ENCODE measurements at regions of chr18 and their contacts with region 1.

Region 1: DNA sequence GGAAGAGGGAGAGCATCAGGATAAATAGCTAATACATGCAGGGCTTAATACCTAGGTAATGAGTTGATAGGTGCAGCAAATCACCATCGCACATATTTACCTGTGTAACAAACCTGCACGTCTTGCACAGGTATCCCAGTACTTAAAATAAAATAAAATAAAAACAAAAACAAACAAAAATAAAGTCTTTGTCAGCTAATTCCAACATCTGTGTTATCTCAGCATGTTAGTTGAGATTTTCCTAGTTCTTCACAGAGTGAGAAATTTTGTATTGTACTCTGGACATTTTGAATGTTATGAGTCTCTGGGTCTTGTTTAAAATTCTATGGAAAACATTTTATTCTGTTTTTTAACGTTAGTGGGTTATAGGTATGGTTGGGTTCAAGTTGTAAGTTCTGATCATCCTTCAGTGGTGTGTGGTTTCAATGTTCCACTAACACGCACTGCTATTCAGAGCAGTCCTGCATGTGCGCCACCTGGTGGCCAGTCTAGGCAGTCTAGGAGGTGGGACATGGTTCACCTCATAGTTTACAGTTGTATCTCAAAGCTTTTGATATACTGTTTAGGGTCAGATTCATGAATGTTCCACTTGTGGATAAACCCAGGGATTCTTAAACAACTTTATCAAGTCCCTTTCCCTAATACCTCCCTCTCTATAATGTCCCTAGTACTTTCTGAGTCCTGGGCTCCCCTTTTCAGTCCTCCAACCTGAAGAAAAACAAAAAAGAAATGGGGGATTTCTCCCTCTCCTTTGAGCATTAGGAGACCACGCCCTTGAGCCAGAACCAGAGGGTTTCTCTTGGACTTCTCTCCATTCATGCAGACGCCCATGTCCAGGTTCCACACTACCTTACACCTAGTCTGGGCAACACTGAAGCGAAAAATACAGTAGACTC is 213.4 kb upstream of the GATA6 start:
- DNase-seq: peak; percentile 60
- ATAC-seq: peak; percentile 100
- H3K4me3 ChIP-seq: no peak overlapping the region
- H3K27ac ChIP-seq: no peak overlapping the region
- H3K4me1 ChIP-seq: no peaks in the 10 kb centered on the region
- H3K27me3 ChIP-seq: peaks cover 18% of the 10 kb centered on the region
- CTCF ChIP-seq: peak; percentile 83
- POLR2A ChIP-seq: no peak
- RAD21 ChIP-seq: peak; percentile 68

Region 2: DNA sequence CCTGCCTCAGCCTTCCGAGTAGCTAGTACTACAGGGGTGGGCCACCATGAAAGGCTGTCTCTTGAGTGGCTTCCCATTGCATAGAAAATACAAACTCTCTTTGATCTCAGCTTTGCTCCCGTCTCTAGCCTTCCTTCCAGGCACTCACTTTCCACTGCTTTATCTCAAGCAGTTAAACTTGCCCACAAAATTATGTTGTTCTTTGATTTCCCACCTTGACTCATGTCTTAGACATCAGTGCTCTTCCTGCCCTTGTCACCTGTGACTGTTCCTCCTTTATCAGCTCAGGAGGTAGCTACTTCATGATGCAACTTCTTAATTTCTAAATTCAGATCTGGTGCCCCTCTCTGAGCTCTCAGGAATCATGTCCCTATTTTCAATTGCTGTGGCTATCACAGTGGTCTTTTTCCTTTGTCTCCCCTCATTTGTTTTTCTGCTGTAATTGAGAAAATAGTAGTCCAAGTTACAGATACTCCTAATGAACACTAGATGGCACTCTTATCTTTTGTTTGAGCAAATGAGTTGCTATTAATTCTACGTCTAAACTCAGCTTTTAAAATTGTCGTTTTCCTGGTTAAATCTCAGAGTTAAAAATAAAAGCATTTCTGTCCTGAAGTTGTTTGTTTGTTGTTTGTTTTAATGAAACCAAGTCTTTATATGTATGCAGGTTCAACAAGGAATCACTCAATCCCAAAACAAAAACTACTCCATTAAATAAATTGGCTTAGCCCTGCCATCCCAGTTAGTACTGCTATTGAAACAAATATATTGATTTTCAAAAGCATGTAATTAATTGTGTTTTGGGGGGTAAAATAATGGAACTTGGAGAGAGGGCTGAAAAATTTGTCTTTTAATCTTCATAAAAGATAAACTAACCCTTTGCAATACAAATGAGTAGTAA is 760.9 kb before region 1 on chr18:
- CTCF ChIA-PET with region 1: no interaction called
- POLR2A ChIA-PET with region 1: no interaction called
- dilution Hi-C with region 1: no loop called
- in situ Hi-C with region 1: no loop called
- intact Hi-C with region 1: loop called (anchors 2 kb)
- DNase-seq: peak; percentile 58
- ATAC-seq: peak; percentile 71; the same call in 1 of the 2 replicates
- H3K4me3 ChIP-seq: no peak overlapping the region
- H3K27ac ChIP-seq: no peak overlapping the region
- H3K4me1 ChIP-seq: no peaks in the 10 kb centered on the region
- H3K27me3 ChIP-seq: peaks cover 11% of the 10 kb centered on the region; the same call in 1 of the 2 replicates
- CTCF ChIP-seq: peak; percentile 77
- POLR2A ChIP-seq: no peak
- RAD21 ChIP-seq: peak; percentile 78

Region 3: GRCh38 chr18:21489119-21489750 is 466.8 kb before region 1 on chr18:
- CTCF ChIA-PET with region 1: no interaction called
- POLR2A ChIA-PET with region 1: no interaction called
- dilution Hi-C with region 1: no loop called
- in situ Hi-C with region 1: loop called (anchors 25 kb)
- intact Hi-C with region 1: loop called (anchors 1 kb)
- DNase-seq: peak; percentile 66
- ATAC-seq: peak; percentile 77
- H3K4me3 ChIP-seq: no peak overlapping the region
- H3K27ac ChIP-seq: no peak overlapping the region
- H3K4me1 ChIP-seq: 0 out of 2 replicates have a peak, but pooled peaks cover 2% of the 10 kb centered on the region
- H3K27me3 ChIP-seq: no peaks in the 10 kb centered on the region
- CTCF ChIP-seq: peak; percentile 76
- POLR2A ChIP-seq: no peak
- RAD21 ChIP-seq: peak; percentile 71

Region 4: DNA sequence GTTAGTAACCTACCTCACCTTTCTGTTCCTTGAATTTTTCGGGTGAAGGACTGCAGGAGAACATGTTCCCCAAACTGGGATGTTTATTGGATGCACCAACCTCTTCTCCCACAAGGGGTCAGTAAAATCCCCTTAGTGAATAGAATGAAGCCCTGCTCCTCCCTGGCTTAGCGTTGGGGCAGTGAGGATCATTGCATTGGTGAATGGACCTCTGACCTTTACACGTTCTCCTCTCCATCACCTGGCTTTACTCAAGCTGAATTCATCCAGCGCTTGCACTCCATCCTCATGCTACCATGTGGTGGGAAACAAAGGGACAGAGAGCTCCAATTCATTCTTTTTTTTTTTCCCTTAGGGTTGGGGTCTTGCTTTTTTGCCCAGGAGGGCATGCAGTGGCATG is 58.2 kb before region 1 on chr18:
- CTCF ChIA-PET with region 1: interaction called, 4 read pairs
- POLR2A ChIA-PET with region 1: no interaction called
- dilution Hi-C with region 1: no loop called
- in situ Hi-C with region 1: no loop called
- intact Hi-C with region 1: loop called (anchors 1 kb)
- DNase-seq: peak; percentile 42
- ATAC-seq: peak; percentile 87
- H3K4me3 ChIP-seq: no peak overlapping the region
- H3K27ac ChIP-seq: no peak overlapping the region
- H3K4me1 ChIP-seq: no peaks in the 10 kb centered on the region; the same call in 1 of the 2 replicates
- H3K27me3 ChIP-seq: no peaks in the 10 kb centered on the region; the same call in 1 of the 2 replicates
- CTCF ChIP-seq: peak; percentile 66
- POLR2A ChIP-seq: no peak
- RAD21 ChIP-seq: peak; percentile 71

Region 5: GRCh38 chr18:21914739-21915319 is 41.2 kb before region 1 on chr18:
- CTCF ChIA-PET with region 1: no interaction called
- POLR2A ChIA-PET with region 1: no interaction called
- dilution Hi-C with region 1: no loop called
- in situ Hi-C with region 1: loop called (anchors 5 kb)
- intact Hi-C with region 1: loop called (anchors 1 kb)
- DNase-seq: peak; percentile 62
- ATAC-seq: peak; percentile 92
- H3K4me3 ChIP-seq: no peak overlapping the region
- H3K27ac ChIP-seq: no peak overlapping the region
- H3K4me1 ChIP-seq: no peaks in the 10 kb centered on the region
- H3K27me3 ChIP-seq: peaks cover 16% of the 10 kb centered on the region
- CTCF ChIP-seq: peak; percentile 86
- POLR2A ChIP-seq: no peak
- RAD21 ChIP-seq: peak; percentile 85

Region 6: DNA sequence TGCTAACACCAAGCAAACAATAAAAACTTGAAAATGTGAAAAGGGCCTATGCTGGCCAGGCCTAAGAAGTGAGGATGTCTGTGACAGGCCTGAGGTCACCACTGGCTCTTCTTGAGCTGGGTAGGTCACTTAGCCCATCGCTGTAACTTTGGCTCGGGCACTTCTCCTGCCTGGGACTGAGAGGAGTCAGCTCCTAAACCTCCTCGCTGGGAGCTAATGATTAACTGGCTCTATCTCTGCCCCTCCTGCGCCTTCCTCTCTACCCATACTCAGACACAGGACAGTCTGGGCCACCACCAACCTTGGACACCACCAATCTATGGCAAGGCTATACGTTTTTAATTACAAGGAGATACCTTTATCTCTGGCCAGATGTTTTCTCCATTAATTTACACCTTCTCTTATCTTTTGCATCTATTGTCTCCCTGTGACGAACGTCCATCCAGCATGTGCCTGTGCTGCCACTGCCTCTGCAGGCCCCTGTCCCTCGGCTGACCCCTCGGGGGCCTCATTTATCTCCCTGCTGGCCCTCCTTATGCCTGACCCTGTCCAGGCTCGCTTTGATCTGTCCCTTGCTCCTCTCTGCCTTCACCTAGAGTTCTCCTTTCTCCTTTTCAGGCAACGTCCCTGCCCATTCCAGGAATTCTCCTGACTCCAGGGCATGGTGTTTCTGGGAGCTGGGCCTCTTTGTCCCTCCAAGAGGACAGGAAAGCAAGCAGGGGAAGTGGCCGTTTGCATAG is 64.3 kb after region 1 on chr18:
- CTCF ChIA-PET with region 1: no interaction called
- POLR2A ChIA-PET with region 1: no interaction called
- dilution Hi-C with region 1: no loop called
- in situ Hi-C with region 1: loop called (anchors 10 kb)
- intact Hi-C with region 1: no loop called
- DNase-seq: no peak
- ATAC-seq: no peak
- H3K4me3 ChIP-seq: no peak overlapping the region
- H3K27ac ChIP-seq: no peak overlapping the region
- H3K4me1 ChIP-seq: no peaks in the 10 kb centered on the region
- H3K27me3 ChIP-seq: peaks cover 3% of the 10 kb centered on the region; the same call in 1 of the 2 replicates
- CTCF ChIP-seq: no peak
- POLR2A ChIP-seq: no peak
- RAD21 ChIP-seq: no peak

Region 7: GRCh38 chr18:22074282-22075069 is 118.5 kb after region 1 on chr18:
- CTCF ChIA-PET with region 1: no interaction called
- POLR2A ChIA-PET with region 1: no interaction called
- dilution Hi-C with region 1: no loop called
- in situ Hi-C with region 1: no loop called
- intact Hi-C with region 1: no loop called
- DNase-seq: no peak
- ATAC-seq: no peak
- H3K4me3 ChIP-seq: no peak overlapping the region
- H3K27ac ChIP-seq: no peak overlapping the region
- H3K4me1 ChIP-seq: no peaks in the 10 kb centered on the region
- H3K27me3 ChIP-seq: peaks cover 20% of the 10 kb centered on the region
- CTCF ChIP-seq: no peak
- POLR2A ChIP-seq: no peak
- RAD21 ChIP-seq: no peak